Activated CD4-positive, alpha-beta T cell treated with anti-CD3 and anti-CD28 coated beads for 36 hours (primary cell): ENCODE measurements at regions of chr17 and their contacts with region 1.

Region 1: DNA sequence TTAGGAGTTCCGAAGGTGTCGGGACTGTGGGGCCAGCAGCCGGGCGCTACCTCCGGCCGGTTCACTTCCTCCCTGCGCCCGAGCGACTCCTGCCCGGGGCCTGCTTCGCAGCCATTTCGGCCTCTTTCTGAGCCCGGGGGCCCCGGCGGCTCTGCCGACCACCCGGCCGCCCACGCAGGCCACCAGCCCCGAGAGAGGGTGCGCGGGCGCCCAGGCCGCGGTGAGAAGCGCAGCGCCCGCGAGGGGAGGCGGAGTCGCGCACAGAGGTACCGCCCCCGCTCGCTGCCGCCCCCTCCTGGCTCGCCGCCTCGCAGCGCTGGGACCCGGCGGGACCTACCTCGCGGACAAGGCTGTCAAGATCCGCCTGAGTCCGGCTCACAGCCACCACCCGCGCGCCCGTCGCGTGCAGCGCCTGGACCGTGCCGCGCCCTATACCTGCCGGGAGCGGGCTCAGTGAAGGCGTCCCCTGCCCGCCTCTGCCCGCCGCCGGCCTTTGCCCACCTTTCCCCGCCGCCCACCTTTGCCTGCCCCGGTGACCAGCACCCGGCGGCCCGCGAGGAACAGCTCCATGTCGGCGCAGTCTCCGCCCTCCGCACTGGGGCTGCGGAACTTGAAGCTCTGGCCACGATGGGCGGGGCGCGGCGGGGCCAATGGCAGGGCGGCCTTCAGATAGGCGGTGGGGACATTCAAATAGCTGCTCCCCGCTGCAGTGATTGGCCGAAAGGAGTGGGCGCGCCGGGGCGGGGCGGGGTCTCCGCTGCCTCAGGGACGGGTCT is at the start of gene DCXR:
- DNase-seq: peak; percentile 97
- ATAC-seq: peak; percentile 97
- H3K4me3 Mint-ChIP-seq: peak within 1 kb of the TSS; percentile 82
- H3K27ac Mint-ChIP-seq: peak within 1 kb of the TSS; percentile 80
- H3K4me1 Mint-ChIP-seq: peaks cover 23% of the 10 kb centered on the region
- H3K27me3 Mint-ChIP-seq: no peaks in the 10 kb centered on the region
- total RNA-seq, gene DCXR: 105 to 166 TPM

Region 2: DNA sequence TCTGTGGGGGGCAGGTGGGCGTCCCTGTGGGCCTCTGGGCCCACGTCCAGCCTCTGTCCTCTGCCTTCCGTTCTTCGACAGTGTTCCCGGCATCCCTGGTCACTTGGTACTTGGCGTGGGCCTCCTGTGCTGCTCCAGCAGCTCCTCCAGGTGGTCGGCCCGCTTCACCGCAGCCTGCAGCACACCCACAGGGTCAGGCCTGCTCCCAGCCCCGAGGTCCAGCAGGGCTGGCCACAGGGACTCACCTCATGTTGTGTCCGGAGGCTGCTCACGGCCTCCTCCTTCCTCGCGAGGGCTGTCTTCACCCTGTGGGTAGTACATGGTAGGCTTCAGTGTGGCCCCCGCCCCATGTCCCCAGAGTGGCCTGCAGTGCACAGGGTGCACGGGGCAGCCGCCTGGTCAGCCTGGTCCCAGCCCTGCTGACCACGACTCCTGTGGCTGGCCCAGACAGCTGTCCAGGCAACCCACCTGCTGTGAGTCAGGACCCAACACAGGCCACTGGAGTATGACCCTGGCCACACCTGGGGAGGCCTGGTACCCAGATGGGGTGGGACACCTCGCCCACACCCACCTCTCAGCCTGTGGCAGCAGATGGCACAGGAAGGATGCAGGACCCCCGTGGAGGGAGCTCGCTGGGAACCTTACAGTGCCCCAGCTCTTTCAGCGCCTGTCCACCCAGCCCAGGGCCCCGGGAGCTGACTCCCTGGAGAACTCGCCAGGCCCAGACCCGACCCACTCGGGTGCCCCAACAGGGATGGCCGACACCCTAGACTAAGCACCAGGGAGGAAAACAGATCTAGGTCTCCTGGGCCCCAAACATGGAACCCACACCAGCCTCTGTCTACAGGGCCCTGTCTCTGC is 847.4 kb before region 1 on chr17:
- CTCF ChIA-PET with region 1: no interaction called
- POLR2A ChIA-PET with region 1: no interaction called
- intact Hi-C with region 1: no loop called
- DNase-seq: no peak
- ATAC-seq: no peak
- H3K4me3 Mint-ChIP-seq: no peak overlapping the region
- H3K27ac Mint-ChIP-seq: no peak overlapping the region
- H3K4me1 Mint-ChIP-seq: no peaks in the 10 kb centered on the region
- H3K27me3 Mint-ChIP-seq: no peaks in the 10 kb centered on the region

Region 3: DNA sequence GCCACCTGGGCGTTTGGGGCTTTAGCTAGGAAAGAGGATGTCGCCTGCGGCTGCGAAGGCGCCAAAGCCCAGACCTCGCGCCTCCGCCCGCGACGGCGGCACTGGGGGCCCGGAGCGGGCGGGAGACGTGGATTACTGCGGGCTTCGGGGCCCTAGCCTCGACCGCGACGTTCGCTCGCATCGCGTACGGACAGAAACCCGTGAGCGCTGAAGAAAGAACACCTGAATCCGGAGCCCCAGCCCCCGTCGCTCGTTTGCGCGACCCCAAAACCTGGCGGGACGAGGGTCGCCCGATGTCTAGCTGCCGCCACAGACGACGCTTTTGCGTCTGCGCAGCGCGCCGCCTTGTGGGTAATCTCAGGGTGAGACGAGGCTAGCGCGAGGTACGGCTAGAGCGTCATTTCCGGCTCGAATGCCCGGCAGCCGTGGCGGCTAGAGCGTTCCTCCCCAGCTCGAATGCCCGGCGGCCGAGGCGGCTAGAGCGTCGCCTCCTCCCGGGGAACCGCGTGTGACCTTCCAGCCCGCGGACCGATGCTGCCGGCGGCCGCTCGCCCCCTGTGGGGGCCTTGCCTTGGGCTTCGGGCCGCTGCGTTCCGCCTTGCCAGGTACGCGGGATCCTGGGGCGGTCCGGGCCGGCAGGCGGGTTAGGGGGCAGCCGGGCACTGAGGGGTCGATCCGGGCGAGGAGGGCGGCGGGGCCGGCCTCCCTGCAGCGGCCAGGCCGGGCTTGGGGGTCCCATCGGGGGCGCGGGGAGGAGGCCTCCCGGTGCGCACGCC is 334.1 kb before region 1 on chr17 and contains the start of gene MRPL12:
- CTCF ChIA-PET with region 1: no interaction called
- POLR2A ChIA-PET with region 1: interaction called, 3 read pairs
- intact Hi-C with region 1: loop called in 1 of 2 experiments (anchors 1 kb)
- DNase-seq: peak; percentile 95
- ATAC-seq: peak; percentile 89
- H3K4me3 Mint-ChIP-seq: peak within 1 kb of the TSS; percentile 86
- H3K27ac Mint-ChIP-seq: peak within 1 kb of the TSS; percentile 97
- H3K4me1 Mint-ChIP-seq: peaks cover 24% of the 10 kb centered on the region
- H3K27me3 Mint-ChIP-seq: no peaks in the 10 kb centered on the region
- total RNA-seq, gene MRPL12: 94.0 to 116 TPM

Region 4: DNA sequence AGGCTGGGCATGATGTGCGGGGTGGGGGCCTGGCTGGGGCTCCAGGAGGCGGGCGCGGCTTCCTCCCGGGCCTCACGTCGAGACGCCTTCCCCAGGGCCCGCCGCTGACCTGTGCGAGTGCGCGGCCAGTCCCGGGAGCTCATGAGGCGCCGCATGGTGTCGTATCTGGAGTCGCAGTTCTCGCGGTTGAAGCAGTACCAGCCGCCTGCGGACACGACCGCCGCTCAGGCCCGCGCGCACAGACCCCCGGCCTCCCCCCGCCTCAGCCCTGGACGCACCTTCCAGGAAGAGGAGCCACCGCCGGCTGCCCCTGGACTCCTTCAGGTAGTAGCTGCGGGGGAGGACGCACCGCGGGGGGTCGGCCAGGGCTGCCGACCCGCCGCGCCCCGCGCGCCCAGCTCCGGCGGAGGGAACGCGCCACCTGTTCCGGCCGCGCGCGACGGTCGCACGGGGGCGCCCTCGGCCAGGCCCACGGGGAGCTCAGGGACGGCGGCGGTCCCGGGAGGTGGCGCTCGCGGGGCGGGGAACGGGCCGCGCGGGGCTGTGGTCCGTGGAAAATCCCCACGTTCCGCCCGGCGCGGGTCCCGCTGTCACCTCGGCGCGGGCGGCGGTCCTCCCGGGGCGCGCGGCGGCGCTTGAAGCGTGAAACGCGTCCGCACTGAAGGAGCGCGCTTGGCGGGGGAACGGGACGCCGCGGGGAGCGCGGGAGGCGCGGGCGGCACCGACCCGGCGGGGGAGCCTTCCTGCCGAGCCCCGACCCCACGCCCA is 77.8 kb before region 1 on chr17:
- CTCF ChIA-PET with region 1: interaction called, 6 read pairs
- POLR2A ChIA-PET with region 1: no interaction called
- intact Hi-C with region 1: loop called in 1 of 2 experiments (anchors 1 kb)
- DNase-seq: peak; percentile 86
- ATAC-seq: peak; percentile 90
- H3K4me3 Mint-ChIP-seq: peak overlapping the region; percentile 38
- H3K27ac Mint-ChIP-seq: no peak overlapping the region
- H3K4me1 Mint-ChIP-seq: no peaks in the 10 kb centered on the region
- H3K27me3 Mint-ChIP-seq: peaks cover 11% of the 10 kb centered on the region

Region 5: GRCh38 chr17:82051776-82052637 is 14.7 kb after region 1 on chr17 and contains the starts of genes GPS1 and RFNG:
- CTCF ChIA-PET with region 1: interaction called, 5 read pairs
- POLR2A ChIA-PET with region 1: no interaction called
- intact Hi-C with region 1: loop called in 1 of 2 experiments (anchors 1 kb)
- DNase-seq: peak; percentile 90
- ATAC-seq: peak; percentile 91
- H3K4me3 Mint-ChIP-seq: peak within 1 kb of the TSS; percentile 82
- H3K27ac Mint-ChIP-seq: peak within 1 kb of the TSS; percentile 73
- H3K4me1 Mint-ChIP-seq: peaks cover 21% of the 10 kb centered on the region
- H3K27me3 Mint-ChIP-seq: no peaks in the 10 kb centered on the region
- total RNA-seq, gene GPS1: 69.0 to 73.5 TPM
- total RNA-seq, gene RFNG: 16.9 to 17.5 TPM

Region 6: DNA sequence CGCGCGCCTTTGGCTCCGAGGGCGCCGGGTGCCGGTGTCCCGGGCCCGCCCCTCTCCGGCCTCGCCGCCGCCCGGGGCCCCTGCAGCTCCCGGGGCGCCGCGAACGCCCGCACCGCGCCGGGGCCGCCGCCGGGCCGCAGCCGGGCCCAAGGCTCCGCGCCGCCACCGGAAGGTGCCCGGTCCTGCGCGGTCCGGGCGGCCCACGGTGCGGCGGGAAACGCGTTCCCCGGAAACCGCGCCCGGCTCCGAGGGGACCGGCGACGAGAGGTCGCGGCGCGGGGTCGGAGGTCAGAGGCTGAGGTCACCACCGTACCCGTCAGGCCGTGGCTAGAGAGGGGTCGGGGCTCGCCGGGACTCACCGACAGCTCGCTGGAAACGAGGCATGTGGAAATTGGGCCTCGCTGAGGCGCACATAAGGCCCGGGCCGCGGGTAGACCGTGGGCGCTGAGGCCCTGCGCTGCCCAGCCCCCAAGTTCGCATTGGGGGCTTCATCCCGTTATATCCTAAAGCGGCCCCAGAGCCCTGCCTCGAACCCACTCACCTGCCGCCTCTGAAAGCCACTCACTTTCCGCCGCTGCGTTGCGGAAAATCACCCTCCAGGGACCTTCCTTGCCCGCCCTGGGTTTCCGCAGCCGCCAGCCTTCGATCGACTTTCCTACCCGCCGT is 28.5 kb after region 1 on chr17 and contains the start of gene DUS1L:
- CTCF ChIA-PET with region 1: interaction called, 5 read pairs
- POLR2A ChIA-PET with region 1: no interaction called
- intact Hi-C with region 1: loop called in 1 of 2 experiments (anchors 1 kb)
- DNase-seq: peak; percentile 83
- ATAC-seq: peak; percentile 93
- H3K4me3 Mint-ChIP-seq: peak within 1 kb of the TSS; percentile 84
- H3K27ac Mint-ChIP-seq: peak within 1 kb of the TSS; percentile 91
- H3K4me1 Mint-ChIP-seq: peaks cover 14% of the 10 kb centered on the region
- H3K27me3 Mint-ChIP-seq: no peaks in the 10 kb centered on the region
- total RNA-seq, gene DUS1L: 119 to 124 TPM

Region 7: DNA sequence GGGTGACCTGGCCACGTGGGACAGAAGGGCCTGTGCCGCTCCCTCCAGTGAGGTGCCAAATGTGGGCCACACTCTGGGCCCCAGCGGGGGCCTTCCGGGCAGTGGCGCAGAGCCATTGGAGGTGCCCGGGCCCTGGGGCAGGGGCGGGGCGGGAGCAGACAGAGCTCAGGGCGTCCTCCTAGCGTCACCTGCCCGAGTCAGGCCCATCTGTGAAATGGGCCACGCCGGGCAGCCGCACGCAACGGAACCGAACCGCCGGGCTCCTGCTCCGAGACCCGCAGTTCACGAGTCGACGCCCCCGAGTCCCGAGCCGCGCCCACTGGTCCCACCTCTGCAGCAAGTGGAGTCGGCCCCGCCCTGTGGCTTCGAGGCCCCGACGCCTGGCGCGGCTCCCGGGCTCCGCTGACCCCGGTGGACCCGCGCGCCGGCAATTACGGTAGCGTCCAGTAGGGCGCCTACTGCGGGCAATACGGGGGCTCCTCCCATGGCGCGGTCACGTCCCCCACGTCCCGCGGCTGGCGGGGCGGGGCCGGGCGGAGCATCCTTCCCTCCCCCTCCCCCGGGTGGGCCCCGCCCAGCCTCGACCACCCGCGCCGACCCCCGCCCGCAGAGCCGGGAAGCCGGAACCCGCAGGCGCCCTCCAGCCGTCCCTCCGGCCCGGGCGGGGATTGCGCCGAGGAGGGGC is 193.5 kb after region 1 on chr17:
- CTCF ChIA-PET with region 1: no interaction called
- POLR2A ChIA-PET with region 1: no interaction called
- intact Hi-C with region 1: loop called in 1 of 2 experiments (anchors 1 kb)
- DNase-seq: peak; percentile 85
- ATAC-seq: peak; percentile 45
- H3K4me3 Mint-ChIP-seq: peak overlapping the region; percentile 79
- H3K27ac Mint-ChIP-seq: peak overlapping the region; percentile 75
- H3K4me1 Mint-ChIP-seq: peaks cover 9% of the 10 kb centered on the region
- H3K27me3 Mint-ChIP-seq: no peaks in the 10 kb centered on the region

Region 8: DNA sequence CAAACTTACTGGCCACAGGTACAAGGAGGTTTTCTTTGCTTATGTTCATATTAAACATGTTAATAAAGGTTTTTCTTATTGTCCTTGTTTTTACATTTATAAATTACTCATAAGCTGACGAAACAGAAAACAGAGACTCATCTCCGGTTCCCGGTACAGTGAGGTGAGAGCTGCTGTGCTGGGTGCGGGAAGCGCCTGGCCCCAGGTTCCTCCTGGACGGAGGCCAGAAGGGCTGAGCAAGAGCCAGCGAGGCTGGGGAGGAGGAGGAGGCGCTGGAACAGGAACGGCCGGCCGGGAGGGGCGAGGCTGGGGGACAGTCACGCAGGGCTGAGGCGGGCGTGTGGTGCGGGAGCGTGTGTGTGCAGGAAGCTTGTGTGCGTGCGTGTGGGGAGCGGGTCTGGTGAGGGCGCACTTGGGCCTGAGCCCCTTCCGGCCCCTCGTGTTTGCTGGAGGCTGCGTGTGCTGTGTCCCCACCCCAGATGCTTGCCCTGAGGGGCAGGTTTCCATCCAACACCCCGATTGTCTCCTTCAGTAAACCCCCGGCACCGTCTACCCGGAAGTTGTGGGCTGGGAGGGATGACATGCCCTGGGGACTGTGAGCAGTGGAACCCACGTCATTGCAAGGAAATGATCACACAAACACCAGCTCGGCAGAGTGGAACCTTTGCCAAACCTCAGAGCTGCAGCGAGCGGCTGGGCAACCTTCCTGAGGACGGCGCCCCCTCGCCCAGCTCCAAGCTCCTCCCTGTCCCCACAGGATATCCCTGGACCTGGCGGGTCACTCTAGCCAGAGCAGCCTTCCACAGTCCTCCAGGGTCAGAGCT is 260.6 kb after region 1 on chr17:
- CTCF ChIA-PET with region 1: no interaction called
- POLR2A ChIA-PET with region 1: interaction called, 3 read pairs
- intact Hi-C with region 1: loop called in 1 of 2 experiments (anchors 1 kb)
- DNase-seq: peak; percentile 96
- ATAC-seq: peak; percentile 62
- H3K4me3 Mint-ChIP-seq: peak overlapping the region; percentile 80
- H3K27ac Mint-ChIP-seq: peak overlapping the region; percentile 100
- H3K4me1 Mint-ChIP-seq: peaks cover 70% of the 10 kb centered on the region
- H3K27me3 Mint-ChIP-seq: no peaks in the 10 kb centered on the region